ENCODE measurements at regions of chr9 and their contacts with region 1.

Region 1: GRCh38 chr9:114405294-114406034 is 17.7 kb upstream of the AKNA start:
- DNase-seq: peak; percentile 91
- H3K4me3 Mint-ChIP-seq: no peak overlapping the region
- H3K27ac Mint-ChIP-seq: peak overlapping the region; percentile 48
- H3K4me1 Mint-ChIP-seq: peaks cover 5% of the 10 kb centered on the region
- H3K27me3 Mint-ChIP-seq: no peaks in the 10 kb centered on the region

Region 2: DNA sequence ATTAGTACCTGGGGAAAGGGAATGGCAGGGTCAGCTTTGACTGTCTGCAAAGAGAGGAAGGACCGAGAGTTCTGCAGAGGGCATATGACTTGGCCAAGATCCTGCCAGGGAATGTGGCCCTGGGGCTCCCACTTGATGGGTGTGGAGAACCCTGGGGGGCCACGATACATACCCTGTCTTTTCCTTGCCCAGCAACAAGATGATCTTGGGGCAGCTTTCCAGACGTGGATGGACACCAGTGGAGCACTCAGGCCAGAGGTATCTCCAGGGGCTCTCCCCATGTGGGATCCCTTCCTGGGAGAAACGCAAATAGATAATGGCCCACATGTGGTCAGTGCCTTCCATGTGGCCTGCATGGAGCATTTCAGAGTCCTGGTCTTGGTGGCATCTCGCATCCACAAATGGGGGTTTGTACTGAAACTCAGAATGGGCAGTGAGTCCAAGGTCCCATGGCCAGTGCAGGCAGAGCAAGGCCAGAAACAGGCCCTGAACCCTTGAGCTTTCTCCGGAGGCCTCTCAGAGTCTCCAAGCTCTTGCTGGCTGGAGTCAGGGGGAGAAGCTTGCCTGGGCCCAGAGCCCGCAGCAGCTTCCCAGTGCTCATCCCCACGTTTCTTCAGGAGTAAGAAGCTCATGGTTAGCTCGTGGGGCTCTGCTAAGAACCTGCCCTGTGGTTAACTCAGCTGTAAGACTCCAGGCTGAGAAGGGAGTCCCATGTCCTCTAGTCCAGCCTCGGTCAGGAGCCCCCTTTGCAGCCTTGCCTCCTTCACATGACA is 100.9 kb before region 1 on chr9:
- CTCF ChIA-PET with region 1: no interaction called
- intact Hi-C with region 1: no loop called
- DNase-seq: no peak
- H3K4me3 Mint-ChIP-seq: no peak overlapping the region
- H3K27ac Mint-ChIP-seq: no peak overlapping the region
- H3K4me1 Mint-ChIP-seq: peaks cover 4% of the 10 kb centered on the region
- H3K27me3 Mint-ChIP-seq: no peaks in the 10 kb centered on the region

Region 3: DNA sequence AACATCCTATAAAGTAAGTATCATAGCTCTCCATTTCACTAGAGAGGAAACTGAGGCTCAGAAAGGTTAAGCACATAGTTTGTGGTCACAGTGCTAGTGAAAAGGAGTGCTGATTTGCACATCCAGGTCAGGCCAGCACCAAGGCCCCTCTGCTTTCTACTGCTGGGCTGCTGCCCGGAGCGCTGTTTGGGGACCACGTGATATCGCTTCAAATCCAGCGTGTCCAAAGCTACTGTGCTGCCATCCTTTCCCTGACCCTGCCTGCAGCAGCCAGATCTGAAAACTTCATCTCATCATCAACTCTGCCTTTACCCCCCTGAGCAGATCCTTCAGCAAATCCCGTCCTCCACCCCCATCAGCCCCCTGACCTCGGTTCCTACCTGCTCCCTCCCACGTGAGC is 23.0 kb after region 1 on chr9:
- CTCF ChIA-PET with region 1: interaction called, 10 read pairs
- intact Hi-C with region 1: no loop called
- DNase-seq: no peak
- H3K4me3 Mint-ChIP-seq: no peak overlapping the region
- H3K27ac Mint-ChIP-seq: no peak overlapping the region
- H3K4me1 Mint-ChIP-seq: no peaks in the 10 kb centered on the region
- H3K27me3 Mint-ChIP-seq: no peaks in the 10 kb centered on the region

Region 4: GRCh38 chr9:114505187-114506081 is 100.0 kb after region 1 on chr9 and contains the start of gene WHRN:
- CTCF ChIA-PET with region 1: interaction called, 27 read pairs
- intact Hi-C with region 1: loop called (anchors 1 kb)
- DNase-seq: peak; percentile 90
- H3K4me3 Mint-ChIP-seq: peak within 1 kb of the TSS; percentile 76
- H3K27ac Mint-ChIP-seq: no peak within 1 kb of the TSS
- H3K4me1 Mint-ChIP-seq: peaks cover 5% of the 10 kb centered on the region
- H3K27me3 Mint-ChIP-seq: peaks cover 15% of the 10 kb centered on the region
- total RNA-seq, gene WHRN: 1.9 to 2.1 TPM

Region 5: GRCh38 chr9:114616653-114617520 is 211.4 kb after region 1 on chr9:
- CTCF ChIA-PET with region 1: interaction called, 10 read pairs
- intact Hi-C with region 1: no loop called
- DNase-seq: peak; percentile 23
- H3K4me3 Mint-ChIP-seq: no peak overlapping the region
- H3K27ac Mint-ChIP-seq: peak overlapping the region; percentile 89
- H3K4me1 Mint-ChIP-seq: peaks cover 59% of the 10 kb centered on the region
- H3K27me3 Mint-ChIP-seq: no peaks in the 10 kb centered on the region

Region 6: DNA sequence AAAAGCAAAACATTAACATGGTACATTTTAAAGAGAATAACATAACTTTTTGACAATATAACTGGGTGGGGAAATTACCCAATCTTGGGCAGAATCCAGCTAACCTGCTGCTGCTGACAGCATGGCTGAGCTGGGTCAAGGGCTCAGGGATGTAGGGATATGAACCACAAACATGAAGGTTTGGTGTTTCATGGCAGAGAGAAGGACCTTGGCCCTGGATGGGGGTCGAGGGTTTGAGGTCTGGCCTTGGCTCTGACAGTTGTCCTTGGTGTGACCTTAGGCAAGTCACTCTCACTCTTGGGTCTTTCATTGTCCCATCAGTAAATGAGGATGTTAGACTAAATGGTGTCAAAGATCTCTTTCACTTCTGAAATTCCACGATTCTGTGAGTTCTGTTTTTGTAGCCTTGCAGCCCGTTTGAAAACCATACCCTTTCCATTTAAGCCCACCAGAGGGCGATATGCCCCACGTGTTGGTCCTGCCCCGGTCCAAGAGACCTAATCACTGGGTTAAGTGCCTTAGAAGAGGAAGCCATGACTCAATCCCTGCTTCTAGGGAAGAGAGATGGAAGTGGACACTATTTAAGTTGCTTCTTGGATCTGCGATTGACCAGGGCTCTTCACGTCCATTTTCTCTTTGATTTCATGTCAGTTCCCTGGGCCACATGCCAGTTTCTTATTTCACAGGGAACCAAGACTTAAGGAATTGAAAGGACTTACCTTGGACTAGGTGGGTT is 333.3 kb after region 1 on chr9:
- CTCF ChIA-PET with region 1: no interaction called
- intact Hi-C with region 1: loop called (anchors 5 kb)
- DNase-seq: peak; percentile 82
- H3K4me3 Mint-ChIP-seq: no peak overlapping the region
- H3K27ac Mint-ChIP-seq: peak overlapping the region; percentile 86
- H3K4me1 Mint-ChIP-seq: peaks cover 56% of the 10 kb centered on the region
- H3K27me3 Mint-ChIP-seq: no peaks in the 10 kb centered on the region

Region 7: DNA sequence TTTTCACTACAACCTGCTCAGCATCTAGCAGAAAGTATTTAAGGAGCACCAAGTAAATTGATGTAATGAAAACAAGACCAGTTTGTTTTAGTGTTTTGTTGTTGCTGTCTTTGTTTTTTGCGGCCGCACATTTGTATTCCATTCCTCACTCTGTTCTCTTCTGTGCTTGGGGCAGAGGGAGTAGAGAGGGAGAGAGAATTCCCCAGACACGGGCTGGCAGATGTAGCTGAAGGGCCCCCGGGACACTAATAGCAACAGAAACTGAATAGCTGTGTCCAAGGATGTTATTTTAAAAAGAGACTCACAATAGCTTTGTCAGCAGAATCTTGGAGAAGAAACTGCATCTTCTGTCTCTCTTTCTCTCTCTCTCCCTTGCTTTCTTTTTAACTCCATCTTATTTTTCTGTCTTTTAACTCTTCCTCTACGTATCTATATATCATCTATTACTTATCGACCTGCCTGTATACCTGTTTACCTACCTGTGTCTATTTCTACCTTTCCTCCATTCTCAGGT is 1893.5 kb after region 1 on chr9:
- CTCF ChIA-PET with region 1: no interaction called
- intact Hi-C with region 1: no loop called
- DNase-seq: no peak
- H3K4me3 Mint-ChIP-seq: no peak overlapping the region
- H3K27ac Mint-ChIP-seq: no peak overlapping the region
- H3K4me1 Mint-ChIP-seq: no peaks in the 10 kb centered on the region
- H3K27me3 Mint-ChIP-seq: peaks cover 3% of the 10 kb centered on the region